Body of pancreas (tissue), 4 donors: ENCODE measurements at regions of chr11 and their contacts with region 1.

Region 1: GRCh38 chr11:124586238-124586860 is 16.6 kb downstream of the OR8A1 start:
- DNase-seq: peak; percentile 52 to 66 (median 60)
- ATAC-seq: no peak
- H3K4me3 ChIP-seq: no peak overlapping the region
- H3K27ac ChIP-seq: no peak overlapping the region
- H3K4me1 ChIP-seq: no peaks in the 10 kb centered on the region
- H3K27me3 ChIP-seq: peaks cover 0 to 11% of the 10 kb centered on the region in 2 donors
- CTCF ChIP-seq: peak; percentile 30 to 67 (median 51)
- POLR2A ChIP-seq: no peak

Region 2: GRCh38 chr11:124070915-124071635 is 515.3 kb before region 1 on chr11:
- intact Hi-C with region 1: loop called (anchors 10 kb)
- DNase-seq: peak; percentile 64 to 67 (median 66)
- ATAC-seq: peak; percentile 38
- H3K4me3 ChIP-seq: no peak overlapping the region
- H3K27ac ChIP-seq: no peak overlapping the region
- H3K4me1 ChIP-seq: no peaks in the 10 kb centered on the region
- H3K27me3 ChIP-seq: no peaks in the 10 kb centered on the region
- CTCF ChIP-seq: peak; percentile 42 to 80 (median 69)
- POLR2A ChIP-seq: no peak

Region 3: DNA sequence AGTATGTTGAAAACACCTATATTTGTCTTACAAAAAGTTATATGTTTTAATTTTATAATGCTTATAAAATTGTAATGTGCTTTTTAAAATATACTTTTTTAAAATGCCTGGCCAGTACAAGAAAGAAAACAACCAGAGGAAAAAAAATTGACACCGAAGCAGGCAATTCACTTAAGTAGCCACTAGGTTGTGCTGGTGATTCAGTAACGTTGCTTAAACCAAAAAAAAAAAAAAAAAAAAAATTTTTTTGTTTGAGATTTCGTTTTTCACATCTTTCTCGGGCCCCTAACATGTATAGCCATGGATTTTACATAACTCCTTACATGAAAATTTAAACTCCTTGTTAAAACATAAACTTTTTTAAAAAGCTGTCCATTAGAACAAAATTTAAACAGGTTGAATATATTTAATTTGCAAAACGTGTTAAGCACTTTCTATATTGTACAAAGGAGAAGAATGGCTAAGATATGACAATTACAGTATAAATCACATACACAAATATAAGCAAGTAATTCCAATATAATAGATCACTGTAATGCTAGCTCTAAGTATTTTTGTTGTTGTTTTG is 170.9 kb before region 1 on chr11:
- intact Hi-C with region 1: loop called (anchors 10 kb)
- DNase-seq: peak in 1 of 4 donors; percentile 8
- ATAC-seq: no peak
- H3K4me3 ChIP-seq: no peak overlapping the region
- H3K27ac ChIP-seq: no peak overlapping the region
- H3K4me1 ChIP-seq: no peaks in the 10 kb centered on the region
- H3K27me3 ChIP-seq: no peaks in the 10 kb centered on the region
- CTCF ChIP-seq: peak; percentile 14 to 65 (median 52)
- POLR2A ChIP-seq: no peak